H1 (cell line): ENCODE measurements at regions of chr17 and their contacts with region 1.

Region 1: GRCh38 chr17:67942810-67943209 is 53.5 kb downstream of the C17orf58 start:
- DNase-seq: no peak
- H3K4me3 ChIP-seq: no peak overlapping the region
- H3K27ac ChIP-seq: no peak overlapping the region
- H3K4me1 ChIP-seq: no peaks in the 10 kb centered on the region
- H3K27me3 ChIP-seq: no peaks in the 10 kb centered on the region
- CTCF ChIP-seq: peak in 2 of 3 experiments; percentile 34 to 67; a peak in 2 of 4 replicates
- EP300 ChIP-seq: no peak
- POLR2A ChIP-seq: no peak
- RAD21 ChIP-seq: peak; percentile 14 to 42; a peak in 2 of 4 replicates

Region 2: DNA sequence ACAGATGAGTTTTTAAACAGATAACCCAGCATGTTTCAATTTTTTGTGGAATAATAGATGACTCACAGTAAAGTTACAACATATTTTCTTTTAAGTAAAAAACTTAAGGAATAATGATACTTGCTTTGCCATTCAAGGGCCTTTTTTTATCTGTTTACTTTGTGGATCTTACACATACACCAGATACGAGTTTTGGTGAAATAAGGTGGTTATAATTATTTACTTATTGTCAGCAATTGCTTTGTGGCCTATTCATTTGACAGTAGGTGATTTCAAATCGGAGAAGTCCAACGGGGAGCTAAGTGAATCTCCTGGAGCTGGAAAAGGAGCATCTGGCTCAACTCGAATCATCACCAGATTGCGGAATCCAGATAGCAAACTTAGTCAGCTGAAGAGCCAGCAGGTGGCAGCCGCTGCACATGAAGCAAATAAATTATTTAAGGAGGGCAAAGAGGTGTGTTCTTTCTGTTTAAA is 51.2 kb before region 1 on chr17:
- CTCF ChIA-PET with region 1: no interaction called
- POLR2A ChIA-PET with region 1: no interaction called
- DNase-seq: no peak
- H3K4me3 ChIP-seq: no peak overlapping the region
- H3K27ac ChIP-seq: no peak overlapping the region
- H3K4me1 ChIP-seq: no peaks in the 10 kb centered on the region
- H3K27me3 ChIP-seq: no peaks in the 10 kb centered on the region
- CTCF ChIP-seq: no peak
- EP300 ChIP-seq: no peak
- POLR2A ChIP-seq: no peak
- RAD21 ChIP-seq: no peak

Region 3: GRCh38 chr17:67922503-67922902 is 20.3 kb before region 1 on chr17:
- CTCF ChIA-PET with region 1: interaction called, 26 read pairs
- POLR2A ChIA-PET with region 1: interaction called, 3 read pairs
- DNase-seq: no peak
- H3K4me3 ChIP-seq: no peak overlapping the region
- H3K27ac ChIP-seq: no peak overlapping the region
- H3K4me1 ChIP-seq: no peaks in the 10 kb centered on the region
- H3K27me3 ChIP-seq: no peaks in the 10 kb centered on the region
- CTCF ChIP-seq: no peak
- EP300 ChIP-seq: no peak
- POLR2A ChIP-seq: no peak
- RAD21 ChIP-seq: no peak

Region 4: GRCh38 chr17:67980456-67980855 is 37.6 kb after region 1 on chr17:
- CTCF ChIA-PET with region 1: no interaction called
- POLR2A ChIA-PET with region 1: no interaction called
- DNase-seq: peak in 1 of 2 experiments; percentile 43
- H3K4me3 ChIP-seq: no peak overlapping the region
- H3K27ac ChIP-seq: no peak overlapping the region
- H3K4me1 ChIP-seq: peaks cover 0 to 2% (median 0%) of the 10 kb centered on the region in 4 experiments; a peak in 3 of 7 replicates
- H3K27me3 ChIP-seq: no peaks in the 10 kb centered on the region
- CTCF ChIP-seq: no peak
- EP300 ChIP-seq: no peak
- POLR2A ChIP-seq: no peak
- RAD21 ChIP-seq: no peak

Region 5: DNA sequence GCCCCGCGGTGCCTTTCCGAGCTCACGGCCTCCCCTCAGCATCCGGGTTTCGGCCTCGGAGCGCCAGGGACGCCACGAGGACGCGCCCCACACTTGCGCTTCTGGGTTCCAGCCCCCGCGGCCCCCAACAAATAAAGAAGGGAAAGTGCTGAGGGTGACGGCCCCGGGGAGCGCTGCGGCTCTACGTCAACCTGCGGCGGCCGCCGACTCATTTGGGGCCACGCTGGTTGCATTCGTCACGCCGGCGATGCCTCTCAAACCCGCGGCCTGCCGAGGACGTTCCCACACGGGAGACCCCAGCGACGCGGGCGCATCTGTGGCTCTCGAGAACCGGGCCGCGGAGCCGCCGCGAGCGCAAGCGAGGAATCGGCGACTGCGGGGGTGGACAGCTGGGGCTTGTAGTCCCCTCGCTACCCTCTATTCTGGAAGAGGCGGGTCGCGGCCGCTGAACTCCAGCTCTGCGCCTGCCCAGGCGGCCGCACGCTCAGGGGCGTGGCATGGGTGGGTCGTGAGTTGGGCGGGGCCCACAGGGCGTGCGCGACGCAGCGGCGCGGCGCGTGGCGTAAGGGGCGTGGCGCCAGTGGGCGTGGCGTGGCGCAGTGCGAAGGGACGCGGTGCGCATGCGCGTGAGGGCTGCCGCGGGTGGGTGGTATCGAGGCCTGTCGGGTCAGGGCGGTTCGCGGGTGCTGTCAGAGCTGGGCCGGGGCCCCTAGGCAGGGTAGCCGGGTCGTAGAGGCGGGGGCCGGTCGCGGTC is 304.8 kb after region 1 on chr17 and contains the start of gene AMZ2:
- CTCF ChIA-PET with region 1: no interaction called
- POLR2A ChIA-PET with region 1: no interaction called
- DNase-seq: peak; percentile 68 to 98
- H3K4me3 ChIP-seq: peak within 1 kb of the TSS; percentile 75 to 88 (median 78)
- H3K27ac ChIP-seq: peak within 1 kb of the TSS; percentile 77
- H3K4me1 ChIP-seq: no peaks in the 10 kb centered on the region; a peak in 2 of 7 replicates
- H3K27me3 ChIP-seq: no peaks in the 10 kb centered on the region
- CTCF ChIP-seq: no peak
- EP300 ChIP-seq: no peak
- POLR2A ChIP-seq: peak; percentile 76 to 82
- RAD21 ChIP-seq: no peak
- total RNA-seq, gene AMZ2: 66.4 and 71.0 TPM in 2 replicates